CD4-positive, alpha-beta T cell (primary cell): ENCODE measurements at regions of chr1 and their contacts with region 1.

Region 1: DNA sequence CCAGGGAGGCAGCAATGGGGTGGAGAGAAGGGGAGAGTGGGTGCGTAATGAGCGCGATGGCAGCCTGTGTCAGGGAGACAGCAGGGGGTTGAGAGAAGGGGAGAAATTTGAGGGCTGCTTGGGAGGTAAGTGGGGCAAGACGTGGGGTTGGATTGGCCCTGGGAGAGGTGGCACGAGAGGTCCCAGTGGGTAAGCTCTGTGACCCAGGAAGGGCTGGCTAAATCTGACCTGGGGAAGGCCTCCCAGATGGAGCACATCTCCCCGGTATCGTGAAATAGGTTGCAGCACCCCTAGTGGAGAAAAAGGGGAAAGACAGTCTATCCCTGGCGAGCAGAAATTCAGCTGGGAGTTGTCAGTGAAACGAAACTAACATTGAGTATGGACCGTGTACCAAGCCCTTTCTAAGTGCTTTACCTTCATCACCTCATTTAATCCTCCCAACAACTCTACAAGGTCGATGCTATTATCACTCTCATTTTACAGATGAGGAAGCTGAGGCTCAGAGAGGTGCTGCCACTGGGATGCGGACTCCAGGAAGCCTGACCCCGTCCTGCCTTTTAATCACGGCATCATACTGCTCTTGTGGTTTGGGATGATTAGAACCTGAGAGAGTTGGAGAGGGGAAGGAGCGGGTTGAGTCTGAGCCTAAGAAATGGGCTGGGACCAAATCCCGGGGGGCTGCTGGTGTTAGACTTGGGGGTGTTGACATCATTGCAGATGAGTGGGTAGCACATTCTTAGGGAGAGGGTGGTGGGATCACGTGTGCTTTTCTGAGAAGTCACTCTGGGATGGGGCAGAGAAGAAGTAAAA is 56.6 kb upstream of the RPL11 start:
- DNase-seq: peak in 11 of 14 experiments; percentile 29 to 84 (median 45)
- ATAC-seq: peak; percentile 92
- H3K4me3 ChIP-seq: peak overlapping the region; percentile 48
- H3K4me3 Mint-ChIP-seq: peak overlapping the region; percentile 11
- H3K27ac ChIP-seq: peak overlapping the region in 1 of 2 donors; percentile 32
- H3K27ac Mint-ChIP-seq: peak overlapping the region; percentile 81
- H3K4me1 ChIP-seq: peaks cover 25% of the 10 kb centered on the region
- H3K4me1 Mint-ChIP-seq: peaks cover 33% of the 10 kb centered on the region
- H3K27me3 ChIP-seq: no peaks in the 10 kb centered on the region
- H3K27me3 Mint-ChIP-seq: no peaks in the 10 kb centered on the region
- CTCF ChIP-seq: peak; percentile 84

Region 2: GRCh38 chr1:22731924-22732720 is 902.9 kb before region 1 on chr1:
- CTCF ChIA-PET with region 1: no interaction called
- POLR2A ChIA-PET with region 1: no interaction called
- intact Hi-C with region 1: no loop called
- DNase-seq: no peak
- ATAC-seq: no peak
- H3K4me3 ChIP-seq: no peak overlapping the region
- H3K4me3 Mint-ChIP-seq: no peak overlapping the region
- H3K27ac ChIP-seq: no peak overlapping the region
- H3K27ac Mint-ChIP-seq: no peak overlapping the region
- H3K4me1 ChIP-seq: no peaks in the 10 kb centered on the region
- H3K4me1 Mint-ChIP-seq: no peaks in the 10 kb centered on the region
- H3K27me3 ChIP-seq: no peaks in the 10 kb centered on the region
- H3K27me3 Mint-ChIP-seq: no peaks in the 10 kb centered on the region
- CTCF ChIP-seq: no peak

Region 3: DNA sequence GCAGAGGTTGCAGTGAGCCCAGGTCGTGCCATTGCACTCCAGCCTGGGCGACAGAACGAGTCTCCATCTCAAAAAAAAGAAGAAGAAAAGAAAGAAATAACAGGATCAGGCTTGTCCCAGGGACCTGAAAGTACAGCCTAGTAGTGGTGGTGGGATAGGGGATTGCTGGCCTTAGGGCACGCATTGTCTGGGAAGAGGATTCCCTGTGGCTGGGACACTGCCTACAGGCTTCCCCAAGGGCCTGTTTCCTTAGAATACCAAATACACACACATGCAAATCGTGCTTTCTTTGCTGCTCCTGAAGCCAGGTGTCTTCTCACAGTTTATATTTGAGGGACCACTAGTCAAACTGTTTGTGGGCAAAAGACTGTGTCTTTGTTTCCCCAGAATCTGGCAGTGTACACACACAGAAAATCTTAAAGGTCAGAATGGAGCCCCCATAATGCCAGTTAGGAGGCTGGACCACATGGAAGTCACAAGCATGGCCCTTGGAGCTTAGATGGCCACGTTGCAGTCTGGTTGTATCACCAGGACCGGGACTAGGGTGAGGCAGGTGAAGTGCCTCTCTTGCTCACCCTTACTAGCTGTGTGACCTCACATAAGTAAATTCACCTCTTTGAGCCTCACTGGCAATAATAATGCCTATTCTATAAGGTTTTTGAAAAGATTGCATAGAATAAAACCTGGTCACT is 138.4 kb before region 1 on chr1:
- CTCF ChIA-PET with region 1: interaction called, 50 read pairs
- POLR2A ChIA-PET with region 1: interaction called, 6 read pairs
- intact Hi-C with region 1: loop called (anchors 1 kb)
- DNase-seq: no peak
- ATAC-seq: no peak
- H3K4me3 ChIP-seq: no peak overlapping the region
- H3K4me3 Mint-ChIP-seq: no peak overlapping the region
- H3K27ac ChIP-seq: no peak overlapping the region
- H3K27ac Mint-ChIP-seq: no peak overlapping the region
- H3K4me1 ChIP-seq: peaks cover 10% of the 10 kb centered on the region
- H3K4me1 Mint-ChIP-seq: no peaks in the 10 kb centered on the region
- H3K27me3 ChIP-seq: no peaks in the 10 kb centered on the region
- H3K27me3 Mint-ChIP-seq: no peaks in the 10 kb centered on the region
- CTCF ChIP-seq: no peak

Region 4: GRCh38 chr1:23539698-23540266 is 95.3 kb before region 1 on chr1:
- CTCF ChIA-PET with region 1: interaction called, 76 read pairs
- POLR2A ChIA-PET with region 1: interaction called, 53 read pairs
- intact Hi-C with region 1: loop called (anchors 1 kb)
- DNase-seq: peak; percentile 86 to 96 (median 90)
- ATAC-seq: peak; percentile 96
- H3K4me3 ChIP-seq: no peak overlapping the region
- H3K4me3 Mint-ChIP-seq: peak overlapping the region; percentile 11
- H3K27ac ChIP-seq: no peak overlapping the region
- H3K27ac Mint-ChIP-seq: peak overlapping the region; percentile 50
- H3K4me1 ChIP-seq: peaks cover 17% of the 10 kb centered on the region
- H3K4me1 Mint-ChIP-seq: peaks cover 18% of the 10 kb centered on the region
- H3K27me3 ChIP-seq: no peaks in the 10 kb centered on the region
- H3K27me3 Mint-ChIP-seq: no peaks in the 10 kb centered on the region
- CTCF ChIP-seq: peak; percentile 94

Region 5: GRCh38 chr1:23577056-23578004 is 57.7 kb before region 1 on chr1:
- CTCF ChIA-PET with region 1: interaction called, 14 read pairs
- POLR2A ChIA-PET with region 1: interaction called, 13 read pairs
- intact Hi-C with region 1: no loop called
- DNase-seq: peak in 2 of 14 experiments; percentile 44 to 52
- ATAC-seq: peak; percentile 81
- H3K4me3 ChIP-seq: no peak overlapping the region
- H3K4me3 Mint-ChIP-seq: peak overlapping the region; percentile 64
- H3K27ac ChIP-seq: peak overlapping the region in 1 of 2 donors; percentile 13
- H3K27ac Mint-ChIP-seq: peak overlapping the region; percentile 43
- H3K4me1 ChIP-seq: peaks cover 29% of the 10 kb centered on the region
- H3K4me1 Mint-ChIP-seq: peaks cover 56% of the 10 kb centered on the region
- H3K27me3 ChIP-seq: no peaks in the 10 kb centered on the region
- H3K27me3 Mint-ChIP-seq: no peaks in the 10 kb centered on the region
- CTCF ChIP-seq: no peak

Region 6: GRCh38 chr1:23598424-23598823 is 36.6 kb before region 1 on chr1:
- CTCF ChIA-PET with region 1: interaction called, 31 read pairs
- POLR2A ChIA-PET with region 1: interaction called, 36 read pairs
- intact Hi-C with region 1: loop called in 1 of 2 experiments (anchors 5 kb)
- DNase-seq: no peak
- ATAC-seq: no peak
- H3K4me3 ChIP-seq: no peak overlapping the region
- H3K4me3 Mint-ChIP-seq: no peak overlapping the region
- H3K27ac ChIP-seq: peak overlapping the region in 1 of 2 donors; percentile 2
- H3K27ac Mint-ChIP-seq: peak overlapping the region; percentile 78
- H3K4me1 ChIP-seq: peaks cover 96% of the 10 kb centered on the region
- H3K4me1 Mint-ChIP-seq: peaks cover 88% of the 10 kb centered on the region
- H3K27me3 ChIP-seq: no peaks in the 10 kb centered on the region
- H3K27me3 Mint-ChIP-seq: no peaks in the 10 kb centered on the region
- CTCF ChIP-seq: no peak

Region 7: DNA sequence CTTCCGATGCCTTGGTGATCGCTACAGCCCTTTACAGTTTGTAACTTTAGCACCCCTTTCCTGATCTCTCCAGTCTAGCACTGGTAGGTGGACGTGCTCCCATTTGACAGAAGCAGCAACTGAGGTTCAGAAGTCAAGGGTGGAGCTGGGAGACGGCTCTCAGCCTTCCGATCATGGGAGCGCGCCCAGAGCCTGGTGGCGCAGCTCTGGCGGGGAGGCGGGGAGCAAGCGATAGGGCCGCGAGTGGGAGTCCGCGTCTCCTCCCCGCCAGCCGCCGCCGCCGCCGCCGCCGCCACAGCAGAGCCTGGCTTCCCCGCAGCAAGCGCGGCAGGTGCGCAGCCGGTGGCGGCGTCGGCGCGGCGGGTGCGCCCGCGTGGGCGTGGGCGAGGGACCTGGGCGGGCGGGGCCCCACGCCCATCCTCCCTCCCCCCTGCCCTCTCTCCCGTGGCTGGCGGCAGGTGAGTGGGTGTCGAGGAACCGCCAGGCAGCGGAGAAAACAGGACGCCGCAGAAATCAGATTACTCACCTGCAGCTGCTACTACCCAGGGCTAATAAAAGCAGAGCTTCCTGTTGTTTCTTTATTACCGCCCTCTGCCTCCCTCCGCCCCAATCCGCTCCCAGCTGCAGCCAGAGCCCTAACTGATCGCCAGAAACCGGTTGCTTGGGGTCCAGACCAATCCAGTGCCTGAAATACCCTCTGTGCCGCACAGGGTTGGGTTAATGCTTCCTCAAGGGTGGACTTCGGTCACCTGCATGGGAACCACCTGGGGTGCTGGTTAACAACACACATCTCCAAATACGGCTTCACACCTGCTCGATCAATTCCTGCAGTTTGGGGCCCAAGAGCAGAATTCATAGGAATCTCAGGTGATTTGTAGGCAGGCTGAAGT is 15.5 kb before region 1 on chr1:
- CTCF ChIA-PET with region 1: interaction called, 58 read pairs
- POLR2A ChIA-PET with region 1: interaction called, 57 read pairs
- intact Hi-C with region 1: loop called (anchors 1 to 2 kb)
- DNase-seq: peak; percentile 75 to 96 (median 89)
- ATAC-seq: peak; percentile 87
- H3K4me3 ChIP-seq: peak overlapping the region; percentile 62
- H3K4me3 Mint-ChIP-seq: peak overlapping the region; percentile 78
- H3K27ac ChIP-seq: peak overlapping the region; percentile 77 to 82
- H3K27ac Mint-ChIP-seq: peak overlapping the region; percentile 97
- H3K4me1 ChIP-seq: peaks cover 88% of the 10 kb centered on the region
- H3K4me1 Mint-ChIP-seq: peaks cover 94% of the 10 kb centered on the region
- H3K27me3 ChIP-seq: no peaks in the 10 kb centered on the region
- H3K27me3 Mint-ChIP-seq: no peaks in the 10 kb centered on the region
- CTCF ChIP-seq: no peak